ENCODE measurements at regions of chr14 and their contacts with region 1.

Region 1: GRCh38 chr14:93994919-93995682 is 2.0 kb upstream of the CCDC197 start:
- DNase-seq: peak; percentile 80 to 92
- ATAC-seq: peak; percentile 81 to 84 (median 84)
- H3K4me3 ChIP-seq: peak overlapping the region; percentile 43
- H3K27ac ChIP-seq: peak overlapping the region; percentile 93
- H3K4me1 ChIP-seq: peaks cover 48% of the 10 kb centered on the region
- H3K27me3 ChIP-seq: no peaks in the 10 kb centered on the region
- CTCF ChIP-seq: no peak

Region 2: GRCh38 chr14:93879362-93879983 is 115.6 kb before region 1 on chr14:
- intact Hi-C with region 1: no loop called
- DNase-seq: no peak
- ATAC-seq: no peak
- H3K4me3 ChIP-seq: no peak overlapping the region
- H3K27ac ChIP-seq: no peak overlapping the region
- H3K4me1 ChIP-seq: no peaks in the 10 kb centered on the region
- H3K27me3 ChIP-seq: peaks cover 0 to 4% (median 1%) of the 10 kb centered on the region in 3 donors
- CTCF ChIP-seq: no peak

Region 3: GRCh38 chr14:93959239-93960107 is 35.6 kb before region 1 on chr14:
- intact Hi-C with region 1: loop called in 1 of 2 experiments (anchors 5 kb)
- DNase-seq: peak; percentile 77 to 93
- ATAC-seq: peak; percentile 75 to 84 (median 80)
- H3K4me3 ChIP-seq: peak overlapping the region; percentile 25
- H3K27ac ChIP-seq: peak overlapping the region; percentile 98
- H3K4me1 ChIP-seq: peaks cover 89% of the 10 kb centered on the region
- H3K27me3 ChIP-seq: no peaks in the 10 kb centered on the region
- CTCF ChIP-seq: no peak

Measured in psoas muscle (tissue), 8 donors.